Dorsolateral prefrontal cortex (tissue), 120 donors: ENCODE measurements at regions of chr20 and their contacts with region 1.

Region 1: GRCh38 chr20:32207626-32208498 is at the starts of genes PLAGL2 and POFUT1:
- DNase-seq: peak; percentile 80 to 94 (median 88)
- H3K4me3 ChIP-seq: peak within 1 kb of the TSS; percentile 72 to 100 (median 96)
- H3K27ac ChIP-seq: peak within 1 kb of the TSS; percentile 35 to 97 (median 90)
- H3K27me3 ChIP-seq: no peaks in the 10 kb centered on the region
- CTCF ChIP-seq: peak in 50 of 56 donors; percentile 11 to 66 (median 48)
- total RNA-seq, gene PLAGL2: 6.0 to 16.0 (median 10.0) TPM
- total RNA-seq, gene POFUT1: 10.1 to 21.0 (median 14.4) TPM

Region 2: DNA sequence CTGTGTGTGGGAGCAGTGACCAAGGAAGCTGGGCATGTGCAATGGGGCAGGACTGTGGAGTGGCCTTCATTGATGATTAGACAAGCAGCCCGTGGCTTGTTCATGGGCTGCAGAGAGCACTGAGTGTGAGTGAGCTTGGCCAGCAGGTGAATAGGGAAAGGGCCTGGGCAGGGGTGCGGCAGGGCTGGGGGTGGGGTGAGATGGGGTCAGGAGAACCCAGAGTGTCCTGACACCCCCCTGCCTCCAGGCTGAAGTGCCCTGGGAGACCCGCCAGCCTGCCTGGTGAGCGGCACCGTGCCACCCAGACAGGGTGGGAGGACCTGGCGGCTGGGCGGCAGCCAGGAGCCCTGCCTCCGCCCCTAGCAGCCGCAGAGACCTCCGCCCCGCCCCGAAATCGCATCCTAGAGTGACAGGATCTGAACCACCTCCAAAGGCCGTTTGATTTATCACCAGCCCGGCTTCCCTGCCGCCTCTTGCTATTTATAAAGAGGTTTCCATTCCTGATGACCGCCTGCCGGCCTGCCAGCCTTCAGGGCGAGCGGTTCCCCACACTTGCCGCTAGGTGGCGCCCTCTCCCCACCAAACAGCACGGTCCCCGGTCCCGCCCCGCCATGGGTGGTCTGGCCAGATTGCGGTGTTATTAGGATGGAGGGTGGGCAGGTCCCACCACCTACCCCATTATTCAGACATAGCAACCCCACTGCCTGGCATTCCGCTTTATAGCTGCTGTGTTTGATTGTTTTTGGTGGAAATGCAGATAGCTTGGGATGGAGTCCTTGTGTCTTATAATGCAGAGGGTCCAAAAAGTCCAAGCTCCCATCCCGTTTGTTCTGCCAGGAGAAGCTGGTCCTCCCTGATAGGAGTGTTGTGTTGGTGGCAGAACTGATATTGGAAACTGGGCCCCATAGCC is 385.2 kb before region 1 on chr20:
- intact Hi-C with region 1: loop called in 1 of 2 experiments (anchors 10 kb)
- DNase-seq: peak; percentile 53 to 91 (median 66)
- H3K4me3 ChIP-seq: peak overlapping the region in 52 of 59 donors; percentile 8 to 62 (median 43)
- H3K27ac ChIP-seq: peak overlapping the region in 6 of 59 donors; percentile 13 to 65 (median 42)
- H3K27me3 ChIP-seq: peaks cover 0 to 3% (median 0%) of the 10 kb centered on the region in 45 donors
- CTCF ChIP-seq: peak; percentile 85 to 100 (median 99)

Region 3: GRCh38 chr20:32109392-32110172 is 98.3 kb before region 1 on chr20 and contains the start of gene TM9SF4:
- intact Hi-C with region 1: loop called (anchors 1 to 2 kb)
- DNase-seq: peak; percentile 89 to 95 (median 92)
- H3K4me3 ChIP-seq: peak within 1 kb of the TSS; percentile 63 to 100 (median 95)
- H3K27ac ChIP-seq: peak within 1 kb of the TSS; percentile 84 to 100 (median 99)
- H3K27me3 ChIP-seq: no peaks in the 10 kb centered on the region
- CTCF ChIP-seq: peak in 30 of 56 donors; percentile 1 to 55 (median 23)
- total RNA-seq, gene TM9SF4: 45.6 to 73.7 (median 60.7) TPM

Region 4: DNA sequence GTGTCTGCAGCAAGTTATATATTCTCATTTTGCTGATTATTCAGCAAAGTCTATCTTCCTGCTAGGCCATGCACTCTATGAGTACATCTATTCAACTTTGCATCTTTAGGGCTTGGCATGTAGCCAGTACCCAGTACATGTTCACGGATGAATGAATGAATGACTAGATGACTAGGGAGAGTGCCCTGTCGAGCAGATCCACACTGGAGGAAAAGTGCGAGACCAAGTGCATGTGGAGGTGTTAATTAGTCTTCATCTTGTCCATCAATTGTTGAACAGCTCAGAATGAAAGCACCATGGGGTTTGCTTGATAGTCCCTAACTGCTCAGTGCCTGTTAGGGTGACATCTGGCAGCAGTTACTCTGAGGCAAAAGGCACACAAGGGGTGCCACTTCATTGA is 67.9 kb before region 1 on chr20:
- intact Hi-C with region 1: no loop called
- DNase-seq: no peak
- H3K4me3 ChIP-seq: no peak overlapping the region
- H3K27ac ChIP-seq: no peak overlapping the region
- H3K27me3 ChIP-seq: no peaks in the 10 kb centered on the region
- CTCF ChIP-seq: no peak

Region 5: GRCh38 chr20:32277361-32278198 is 69.7 kb after region 1 on chr20 and contains the start of gene KIF3B:
- intact Hi-C with region 1: loop called (anchors 5 kb)
- DNase-seq: peak; percentile 73 to 92 (median 90)
- H3K4me3 ChIP-seq: peak within 1 kb of the TSS; percentile 58 to 100 (median 95)
- H3K27ac ChIP-seq: peak within 1 kb of the TSS in 49 of 59 donors; percentile 5 to 87 (median 67)
- H3K27me3 ChIP-seq: no peaks in the 10 kb centered on the region
- CTCF ChIP-seq: peak in 14 of 56 donors; percentile 8 to 42 (median 16)
- total RNA-seq, gene KIF3B: 27.3 to 89.7 (median 65.4) TPM

Region 6: GRCh38 chr20:32445539-32446273 is 237.8 kb after region 1 on chr20:
- intact Hi-C with region 1: loop called (anchors 5 to 10 kb)
- DNase-seq: peak in 4 of 10 donors; percentile 28 to 60 (median 45)
- H3K4me3 ChIP-seq: peak overlapping the region in 1 of 59 donors; percentile 17
- H3K27ac ChIP-seq: peak overlapping the region in 57 of 59 donors; percentile 4 to 98 (median 80)
- H3K27me3 ChIP-seq: no peaks in the 10 kb centered on the region
- CTCF ChIP-seq: no peak

Region 7: DNA sequence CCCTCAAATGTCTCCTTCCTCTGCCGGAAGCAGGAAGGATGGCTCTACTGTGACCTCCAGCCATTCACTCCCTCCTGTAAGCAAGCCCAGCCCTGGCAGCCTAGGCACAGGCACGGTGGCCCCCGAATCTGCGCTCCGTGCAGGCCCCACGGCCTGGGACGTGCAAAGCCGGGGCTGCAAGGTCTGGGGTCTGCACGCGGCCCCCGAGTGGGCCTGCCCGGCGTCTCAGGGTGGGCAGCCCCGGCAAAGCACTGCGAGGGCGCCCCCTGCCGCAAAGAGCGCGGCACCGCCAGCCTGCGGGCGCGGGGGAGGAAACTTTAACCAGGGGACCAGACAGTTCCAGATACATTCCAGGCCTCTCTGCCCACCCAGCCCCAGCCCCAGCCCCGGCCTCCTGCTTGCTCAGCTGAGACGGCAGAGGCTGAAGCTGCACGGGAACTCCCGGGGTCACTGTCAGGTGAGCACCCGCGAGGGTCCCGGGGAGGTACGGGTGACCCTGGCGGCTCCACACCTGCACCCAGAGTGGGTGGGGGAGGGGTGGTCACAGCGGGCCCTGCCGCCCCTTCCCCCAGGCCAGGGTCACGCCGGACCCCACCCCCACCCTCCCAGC is 249.1 kb after region 1 on chr20:
- intact Hi-C with region 1: loop called in 1 of 2 experiments (anchors 10 kb)
- DNase-seq: peak in 5 of 10 donors; percentile 50 to 79 (median 56)
- H3K4me3 ChIP-seq: peak overlapping the region; percentile 32 to 74 (median 58)
- H3K27ac ChIP-seq: peak overlapping the region in 58 of 59 donors; percentile 62 to 99 (median 86)
- H3K27me3 ChIP-seq: no peaks in the 10 kb centered on the region
- CTCF ChIP-seq: peak; percentile 48 to 92 (median 80)

Region 8: GRCh38 chr20:32484958-32485769 is 277.3 kb after region 1 on chr20:
- intact Hi-C with region 1: loop called (anchors 10 kb)
- DNase-seq: peak; percentile 82 to 95 (median 88)
- H3K4me3 ChIP-seq: peak overlapping the region in 58 of 59 donors; percentile 42 to 92 (median 78)
- H3K27ac ChIP-seq: peak overlapping the region; percentile 58 to 99 (median 96)
- H3K27me3 ChIP-seq: no peaks in the 10 kb centered on the region
- CTCF ChIP-seq: peak; percentile 72 to 95 (median 88)